ENCODE measurements at regions of chr2 and their contacts with region 1.

Region 1: DNA sequence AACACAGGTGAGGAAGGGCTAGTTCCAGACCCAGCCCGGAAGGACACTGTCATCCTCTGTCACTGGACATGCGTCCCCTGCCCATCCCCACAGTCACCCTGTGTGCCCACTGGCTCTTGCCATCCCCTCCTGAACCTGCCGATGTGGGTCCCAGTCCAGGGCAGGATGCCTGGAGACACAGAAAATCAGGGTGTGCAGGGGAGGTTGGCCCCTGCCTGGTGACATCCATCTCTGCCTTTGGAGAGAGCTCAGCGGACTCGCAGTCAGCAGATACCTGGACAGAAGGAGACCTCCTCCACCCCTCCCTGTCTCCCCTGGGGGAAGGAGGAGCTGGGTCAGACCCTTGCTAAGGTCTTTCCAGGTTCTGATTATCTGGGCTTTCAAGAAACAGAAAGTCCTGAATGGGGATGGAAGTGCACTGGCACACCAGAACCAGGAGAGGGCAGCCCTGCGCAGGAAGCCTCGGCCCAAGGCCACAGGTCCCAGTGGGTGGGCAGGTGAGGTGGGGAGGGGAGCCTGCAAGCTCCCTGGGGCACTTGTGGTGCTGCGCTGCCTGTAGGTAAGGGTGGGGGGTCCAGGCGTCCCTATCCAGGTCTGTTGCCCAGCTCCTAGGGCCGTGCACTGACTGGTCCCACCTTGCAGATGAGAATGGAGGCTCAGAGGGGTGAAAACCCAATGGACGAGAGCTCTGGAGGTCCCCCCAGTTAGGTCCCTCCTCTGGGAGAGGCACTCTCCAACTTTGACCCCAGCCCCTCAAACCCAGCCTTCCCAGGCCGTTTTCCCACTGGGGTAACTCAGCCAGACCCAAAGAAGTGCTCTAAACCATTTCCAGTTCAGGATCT is 9.7 kb upstream of the OTOS start:
- DNase-seq: no peak
- H3K4me3 ChIP-seq: no peak overlapping the region
- H3K27ac ChIP-seq: no peak overlapping the region
- H3K4me1 ChIP-seq: no peaks in the 10 kb centered on the region
- H3K27me3 ChIP-seq: peaks cover 0 to 61% of the 10 kb centered on the region in 2 donors
- CTCF ChIP-seq: peak; percentile 38 to 50

Region 2: DNA sequence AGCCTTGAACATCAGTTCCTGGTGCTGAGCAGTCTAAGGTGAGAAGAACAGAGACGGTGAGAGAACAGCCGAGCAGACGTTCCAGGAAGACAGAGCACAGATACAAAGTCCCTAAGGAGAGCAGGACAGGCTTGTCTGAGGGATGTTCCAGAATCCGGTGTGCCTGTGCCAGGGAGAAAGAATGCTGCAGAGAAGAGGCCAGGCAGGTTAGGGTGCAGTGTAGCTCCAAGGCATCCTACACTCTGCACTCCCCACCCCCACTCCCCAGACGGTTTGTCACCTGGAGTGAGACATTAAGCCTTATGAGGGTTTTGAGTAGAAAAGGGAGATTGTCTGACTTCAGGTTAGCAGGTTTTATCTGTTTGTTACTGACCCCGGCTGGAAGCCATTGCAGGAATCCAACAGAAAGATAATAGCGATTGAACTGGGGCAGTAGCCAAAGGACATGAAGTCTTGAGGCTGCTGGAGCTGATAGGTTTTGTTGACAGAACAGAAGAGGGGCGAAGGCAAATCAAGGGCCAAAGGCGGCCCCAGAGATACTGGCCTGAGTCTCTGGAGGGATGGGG is 60.9 kb before region 1 on chr2:
- intact Hi-C with region 1: loop called (anchors 10 kb)
- DNase-seq: no peak
- H3K4me3 ChIP-seq: no peak overlapping the region
- H3K27ac ChIP-seq: no peak overlapping the region
- H3K4me1 ChIP-seq: no peaks in the 10 kb centered on the region
- H3K27me3 ChIP-seq: peaks cover 0 to 11% of the 10 kb centered on the region in 2 donors
- CTCF ChIP-seq: no peak